Activated naive CD4-positive, alpha-beta T cell treated with anti-CD3 and anti-CD28 coated beads for 36 hours (primary cell): ENCODE measurements at regions of chr7 and their contacts with region 1.

Region 1: DNA sequence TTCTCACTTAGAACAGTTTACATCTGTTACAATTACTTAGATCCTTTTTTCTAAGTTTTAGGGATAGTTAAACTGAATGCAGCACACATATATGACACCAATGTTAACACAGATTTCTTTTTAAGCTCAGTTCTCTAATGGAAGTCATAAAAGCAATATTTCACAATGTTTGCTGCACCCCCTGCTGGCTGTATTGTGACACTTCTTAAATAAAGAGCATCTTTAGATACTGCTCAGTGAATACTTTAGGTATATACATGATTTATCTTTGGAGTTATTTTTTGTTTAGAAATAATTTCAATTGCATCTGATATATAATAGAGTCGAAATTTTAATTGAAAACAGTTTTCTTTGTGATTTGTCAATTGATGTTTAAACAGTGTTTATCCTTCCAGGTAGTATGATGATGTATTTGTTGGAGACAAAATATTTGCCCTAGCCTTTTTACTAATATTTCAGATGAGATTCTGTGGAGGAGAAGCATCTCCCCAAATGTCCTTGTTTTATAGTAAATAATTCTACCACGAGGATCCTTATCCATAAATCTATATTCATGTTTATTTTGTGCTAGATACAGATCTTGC is 174.4 kb downstream of the ST7 start:
- DNase-seq: peak; percentile 73
- H3K4me3 Mint-ChIP-seq: no peak overlapping the region
- H3K27ac Mint-ChIP-seq: no peak overlapping the region
- H3K4me1 Mint-ChIP-seq: no peaks in the 10 kb centered on the region
- H3K27me3 Mint-ChIP-seq: no peaks in the 10 kb centered on the region

Region 2: DNA sequence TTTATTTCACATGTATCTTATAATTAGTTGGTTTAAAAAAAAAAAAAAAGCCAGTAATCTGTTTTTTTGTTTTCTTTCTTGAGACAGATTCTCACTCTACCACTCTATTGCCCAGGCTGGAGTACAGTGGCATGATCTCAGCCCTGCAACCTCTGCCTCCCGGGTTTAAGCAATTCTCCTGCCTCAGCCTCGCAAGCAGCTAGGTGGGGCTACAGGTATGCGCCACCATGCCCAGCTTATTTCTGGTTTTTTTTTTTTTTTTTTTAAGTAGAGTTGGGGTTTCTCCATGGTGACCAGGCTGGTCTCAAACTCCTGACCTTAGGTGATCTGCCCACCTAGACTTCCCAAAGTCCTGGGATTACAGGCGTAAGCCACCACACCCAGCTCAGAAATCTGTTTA is 299.4 kb before region 1 on chr7:
- CTCF ChIA-PET with region 1: no interaction called
- intact Hi-C with region 1: loop called (anchors 5 kb)
- DNase-seq: peak; percentile 12
- H3K4me3 Mint-ChIP-seq: no peak overlapping the region
- H3K27ac Mint-ChIP-seq: no peak overlapping the region
- H3K4me1 Mint-ChIP-seq: peaks cover 4% of the 10 kb centered on the region
- H3K27me3 Mint-ChIP-seq: peaks cover 17% of the 10 kb centered on the region

Region 3: DNA sequence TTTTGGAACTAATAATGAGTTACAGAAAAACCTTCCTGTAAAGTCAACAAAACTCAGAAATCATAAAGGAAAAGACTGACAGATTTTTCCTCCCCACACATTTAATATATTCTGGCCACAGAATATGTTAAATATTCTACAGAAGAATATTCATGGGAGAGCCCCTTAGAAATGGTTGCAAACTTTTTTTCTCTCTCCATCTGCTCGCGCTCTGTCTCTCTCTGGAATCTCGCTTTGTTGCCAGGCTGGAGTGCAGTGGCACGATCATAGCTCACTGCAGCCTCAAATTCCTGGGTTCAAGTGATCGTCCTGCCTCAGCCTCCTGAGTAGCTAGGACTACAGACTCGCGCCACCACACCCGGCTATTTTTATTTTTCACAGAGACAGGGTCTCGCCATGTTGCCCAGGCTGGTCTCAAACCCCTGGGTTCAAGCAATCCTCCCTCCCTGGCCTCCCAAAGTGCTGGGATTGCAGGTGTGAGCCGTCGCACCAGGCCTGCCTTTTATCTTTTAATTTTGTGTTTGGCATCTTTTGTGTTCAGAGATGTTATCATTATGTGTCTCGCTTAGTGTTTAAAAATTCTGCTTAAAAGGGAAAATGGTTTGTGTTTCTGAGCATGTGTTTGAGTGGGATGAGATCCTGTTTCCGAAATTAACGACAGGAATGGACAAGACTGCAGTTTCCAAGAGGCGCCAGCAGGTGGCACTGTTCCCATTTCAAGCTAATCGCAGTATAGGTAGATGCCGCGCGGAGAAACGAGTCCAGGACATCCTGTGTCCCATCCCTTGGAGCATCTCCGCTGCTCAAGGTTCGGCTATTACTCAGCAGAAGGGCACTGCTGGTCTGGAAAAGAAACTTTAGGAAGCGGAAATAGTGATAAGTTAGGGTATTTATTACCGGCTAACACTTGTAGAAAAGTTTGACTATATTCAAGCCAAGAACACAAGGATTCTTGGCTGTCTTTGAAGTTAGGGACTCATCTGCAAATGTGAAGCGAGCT is 197.5 kb before region 1 on chr7:
- CTCF ChIA-PET with region 1: interaction called, 45 read pairs
- intact Hi-C with region 1: loop called (anchors 1 kb)
- DNase-seq: peak; percentile 85
- H3K4me3 Mint-ChIP-seq: no peak overlapping the region
- H3K27ac Mint-ChIP-seq: no peak overlapping the region
- H3K4me1 Mint-ChIP-seq: peaks cover 3% of the 10 kb centered on the region
- H3K27me3 Mint-ChIP-seq: no peaks in the 10 kb centered on the region

Region 4: GRCh38 chr7:117005449-117005848 is 122.2 kb before region 1 on chr7:
- CTCF ChIA-PET with region 1: interaction called, 11 read pairs
- intact Hi-C with region 1: no loop called
- DNase-seq: no peak
- H3K4me3 Mint-ChIP-seq: no peak overlapping the region
- H3K27ac Mint-ChIP-seq: no peak overlapping the region
- H3K4me1 Mint-ChIP-seq: peaks cover 45% of the 10 kb centered on the region
- H3K27me3 Mint-ChIP-seq: no peaks in the 10 kb centered on the region

Region 5: DNA sequence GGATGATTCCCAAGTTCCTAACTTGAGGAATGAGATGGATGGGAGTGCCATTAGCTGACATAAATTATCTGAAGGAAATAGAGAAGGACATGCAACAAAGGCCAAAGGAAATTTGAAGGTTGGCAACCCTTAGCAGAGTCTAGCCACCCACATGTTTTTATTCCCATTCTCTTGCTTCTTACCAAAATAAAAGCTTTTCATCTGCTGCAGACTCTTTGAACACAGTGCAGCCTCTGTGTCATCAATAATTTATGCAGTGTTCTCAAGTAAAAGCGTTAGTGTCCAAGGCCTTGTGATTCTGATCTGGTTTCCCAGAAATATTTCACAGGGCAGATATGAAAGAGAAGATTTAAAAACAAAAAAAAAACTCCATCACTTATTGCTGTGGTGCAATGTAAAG is 75.9 kb before region 1 on chr7:
- CTCF ChIA-PET with region 1: no interaction called
- intact Hi-C with region 1: no loop called
- DNase-seq: no peak
- H3K4me3 Mint-ChIP-seq: no peak overlapping the region
- H3K27ac Mint-ChIP-seq: no peak overlapping the region
- H3K4me1 Mint-ChIP-seq: peaks cover 34% of the 10 kb centered on the region
- H3K27me3 Mint-ChIP-seq: no peaks in the 10 kb centered on the region